ENCODE measurements at regions of chr2 and their contacts with region 1.

Region 1: GRCh38 chr2:171687287-171688128 is at the start of gene DYNC1I2:
- DNase-seq: peak; percentile 88
- ATAC-seq: peak; percentile 92
- H3K4me3 ChIP-seq: peak within 1 kb of the TSS; percentile 77 to 89 (median 88)
- H3K4me3 Mint-ChIP-seq: peak within 1 kb of the TSS; percentile 93
- H3K27ac ChIP-seq: peak within 1 kb of the TSS; percentile 58 to 83
- H3K27ac Mint-ChIP-seq: peak within 1 kb of the TSS; percentile 85
- H3K4me1 ChIP-seq: peaks cover 12 to 13% of the 10 kb centered on the region in 2 donors
- H3K4me1 Mint-ChIP-seq: peaks cover 18% of the 10 kb centered on the region
- H3K27me3 ChIP-seq: no peaks in the 10 kb centered on the region
- H3K27me3 Mint-ChIP-seq: peaks cover 9% of the 10 kb centered on the region
- CTCF ChIP-seq: no peak
- total RNA-seq, gene DYNC1I2: 53.9 and 57.6 TPM in 2 replicates

Region 2: GRCh38 chr2:169824373-169825333 is 1862.9 kb before region 1 on chr2 and contains the start of gene METTL5:
- CTCF ChIA-PET with region 1: no interaction called
- POLR2A ChIA-PET with region 1: no interaction called
- intact Hi-C with region 1: loop called (anchors 5 kb)
- DNase-seq: peak; percentile 86
- ATAC-seq: peak; percentile 74
- H3K4me3 ChIP-seq: peak within 1 kb of the TSS; percentile 64 to 90 (median 68)
- H3K4me3 Mint-ChIP-seq: peak within 1 kb of the TSS; percentile 90
- H3K27ac ChIP-seq: peak within 1 kb of the TSS in 1 of 2 donors; percentile 73
- H3K27ac Mint-ChIP-seq: peak within 1 kb of the TSS; percentile 90
- H3K4me1 ChIP-seq: peaks cover 28 to 34% of the 10 kb centered on the region in 2 donors
- H3K4me1 Mint-ChIP-seq: peaks cover 47% of the 10 kb centered on the region
- H3K27me3 ChIP-seq: no peaks in the 10 kb centered on the region
- H3K27me3 Mint-ChIP-seq: no peaks in the 10 kb centered on the region
- CTCF ChIP-seq: peak; percentile 94
- total RNA-seq, gene METTL5: 36.4 and 37.0 TPM in 2 replicates

Region 3: DNA sequence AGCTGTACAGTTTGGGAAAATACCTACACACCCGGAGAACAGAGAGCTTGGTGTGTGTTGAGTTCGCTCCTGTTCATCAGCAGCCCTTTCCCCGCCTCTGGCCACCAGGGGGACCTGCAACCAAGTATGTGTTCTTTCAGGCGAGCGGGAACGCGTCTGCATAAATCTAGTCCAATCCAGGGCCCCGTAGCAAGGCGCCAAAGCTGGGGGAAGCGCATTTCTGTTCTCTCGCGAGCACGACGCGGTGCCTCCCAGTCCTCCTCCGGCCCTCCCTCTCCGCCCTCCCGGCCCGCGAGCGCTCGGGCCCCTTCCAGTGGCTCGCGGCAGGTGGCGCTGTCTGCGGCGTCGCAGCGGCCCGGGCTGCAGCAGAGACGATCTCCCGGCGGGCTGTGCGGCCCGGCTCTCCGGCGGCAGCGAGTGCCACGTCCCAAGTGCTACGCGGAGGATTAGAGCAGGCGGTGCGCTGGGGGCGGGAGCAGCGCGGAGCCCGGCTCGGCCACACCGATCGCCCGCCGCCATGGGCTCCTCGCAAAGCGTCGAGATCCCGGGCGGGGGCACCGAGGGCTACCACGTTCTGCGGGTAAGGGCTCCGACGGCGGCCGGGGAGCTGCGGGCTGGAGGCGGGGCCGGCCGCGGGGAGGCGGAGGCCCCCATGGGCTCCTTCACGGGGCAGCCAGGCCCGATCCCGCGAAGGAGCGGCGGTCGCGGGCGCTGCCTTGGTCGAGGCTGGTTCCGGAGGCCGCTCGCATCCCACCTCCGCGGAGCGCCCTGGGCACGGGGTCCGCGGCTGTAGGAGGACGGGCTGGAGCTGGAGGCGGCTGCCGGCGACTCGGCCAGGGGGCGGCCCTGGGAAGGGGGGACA is 758.5 kb before region 1 on chr2 and contains the start of gene GORASP2:
- CTCF ChIA-PET with region 1: interaction called, 3 read pairs
- POLR2A ChIA-PET with region 1: no interaction called
- intact Hi-C with region 1: loop called (anchors 1 kb)
- DNase-seq: peak; percentile 99
- ATAC-seq: peak; percentile 91
- H3K4me3 ChIP-seq: peak within 1 kb of the TSS; percentile 73 to 95 (median 89)
- H3K4me3 Mint-ChIP-seq: peak within 1 kb of the TSS; percentile 92
- H3K27ac ChIP-seq: peak within 1 kb of the TSS; percentile 75 to 90
- H3K27ac Mint-ChIP-seq: peak within 1 kb of the TSS; percentile 96
- H3K4me1 ChIP-seq: peaks cover 20 to 22% of the 10 kb centered on the region in 2 donors
- H3K4me1 Mint-ChIP-seq: peaks cover 34% of the 10 kb centered on the region
- H3K27me3 ChIP-seq: no peaks in the 10 kb centered on the region
- H3K27me3 Mint-ChIP-seq: no peaks in the 10 kb centered on the region
- CTCF ChIP-seq: peak; percentile 99
- total RNA-seq, gene GORASP2: 48.8 and 50.5 TPM in 2 replicates

Region 4: GRCh38 chr2:171703574-171704347 is 16.3 kb after region 1 on chr2:
- CTCF ChIA-PET with region 1: interaction called, 16 read pairs
- POLR2A ChIA-PET with region 1: no interaction called
- intact Hi-C with region 1: loop called (anchors 2 kb)
- DNase-seq: peak; percentile 52
- ATAC-seq: no peak
- H3K4me3 ChIP-seq: no peak overlapping the region
- H3K4me3 Mint-ChIP-seq: no peak overlapping the region
- H3K27ac ChIP-seq: no peak overlapping the region
- H3K27ac Mint-ChIP-seq: peak overlapping the region; percentile 81
- H3K4me1 ChIP-seq: peaks cover 7 to 8% of the 10 kb centered on the region in 2 donors
- H3K4me1 Mint-ChIP-seq: peaks cover 10% of the 10 kb centered on the region
- H3K27me3 ChIP-seq: no peaks in the 10 kb centered on the region
- H3K27me3 Mint-ChIP-seq: no peaks in the 10 kb centered on the region
- CTCF ChIP-seq: peak; percentile 71

Region 5: DNA sequence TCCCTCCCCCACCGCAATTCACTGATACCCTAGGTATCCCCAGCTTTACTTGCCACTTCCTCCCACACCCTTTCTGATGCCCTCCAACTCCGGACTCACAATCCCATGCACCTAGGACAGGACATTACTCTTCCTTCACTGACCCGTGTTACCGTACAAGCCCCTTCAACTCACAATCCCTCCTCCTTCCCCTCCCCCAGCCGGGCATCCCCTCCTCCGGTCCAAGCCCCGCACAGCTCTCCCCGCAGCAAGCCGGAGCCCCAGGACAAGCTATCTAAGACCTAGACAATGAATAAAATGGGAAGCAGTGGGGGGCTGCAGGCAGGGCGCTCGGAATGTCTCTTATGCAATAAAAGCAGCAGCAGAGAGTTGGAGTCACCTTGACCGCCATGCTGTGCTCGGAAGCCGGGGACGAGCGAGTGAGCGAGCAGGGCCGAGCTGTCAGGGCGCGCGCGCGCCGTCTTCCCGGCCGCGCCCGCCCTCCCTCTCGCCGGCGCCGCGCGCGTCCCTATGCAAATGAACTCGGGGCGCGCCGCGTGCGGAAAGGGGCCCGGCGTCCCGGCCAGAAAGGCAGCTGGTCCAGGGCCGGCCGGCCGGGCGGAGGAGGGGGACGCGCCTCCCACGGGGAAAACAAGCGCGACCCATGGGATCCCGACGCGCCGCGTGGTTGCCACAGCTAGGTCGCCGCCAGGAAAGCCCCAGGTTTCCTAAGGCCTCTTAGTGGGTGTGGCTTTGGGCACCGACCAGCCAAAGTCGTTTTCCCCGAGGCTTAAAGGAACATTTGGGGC is 206.5 kb after region 1 on chr2 and contains the start of gene SLC25A12:
- CTCF ChIA-PET with region 1: no interaction called
- POLR2A ChIA-PET with region 1: no interaction called
- intact Hi-C with region 1: loop called (anchors 5 kb)
- DNase-seq: peak; percentile 87
- ATAC-seq: peak; percentile 92
- H3K4me3 ChIP-seq: peak within 1 kb of the TSS; percentile 78 to 93 (median 88)
- H3K4me3 Mint-ChIP-seq: peak within 1 kb of the TSS; percentile 99
- H3K27ac ChIP-seq: peak within 1 kb of the TSS; percentile 69 to 88
- H3K27ac Mint-ChIP-seq: peak within 1 kb of the TSS; percentile 91
- H3K4me1 ChIP-seq: peaks cover 14 to 16% of the 10 kb centered on the region in 2 donors
- H3K4me1 Mint-ChIP-seq: peaks cover 25% of the 10 kb centered on the region
- H3K27me3 ChIP-seq: no peaks in the 10 kb centered on the region
- H3K27me3 Mint-ChIP-seq: no peaks in the 10 kb centered on the region
- CTCF ChIP-seq: no peak
- total RNA-seq, gene SLC25A12: 19.6 and 21.0 TPM in 2 replicates

Region 6: DNA sequence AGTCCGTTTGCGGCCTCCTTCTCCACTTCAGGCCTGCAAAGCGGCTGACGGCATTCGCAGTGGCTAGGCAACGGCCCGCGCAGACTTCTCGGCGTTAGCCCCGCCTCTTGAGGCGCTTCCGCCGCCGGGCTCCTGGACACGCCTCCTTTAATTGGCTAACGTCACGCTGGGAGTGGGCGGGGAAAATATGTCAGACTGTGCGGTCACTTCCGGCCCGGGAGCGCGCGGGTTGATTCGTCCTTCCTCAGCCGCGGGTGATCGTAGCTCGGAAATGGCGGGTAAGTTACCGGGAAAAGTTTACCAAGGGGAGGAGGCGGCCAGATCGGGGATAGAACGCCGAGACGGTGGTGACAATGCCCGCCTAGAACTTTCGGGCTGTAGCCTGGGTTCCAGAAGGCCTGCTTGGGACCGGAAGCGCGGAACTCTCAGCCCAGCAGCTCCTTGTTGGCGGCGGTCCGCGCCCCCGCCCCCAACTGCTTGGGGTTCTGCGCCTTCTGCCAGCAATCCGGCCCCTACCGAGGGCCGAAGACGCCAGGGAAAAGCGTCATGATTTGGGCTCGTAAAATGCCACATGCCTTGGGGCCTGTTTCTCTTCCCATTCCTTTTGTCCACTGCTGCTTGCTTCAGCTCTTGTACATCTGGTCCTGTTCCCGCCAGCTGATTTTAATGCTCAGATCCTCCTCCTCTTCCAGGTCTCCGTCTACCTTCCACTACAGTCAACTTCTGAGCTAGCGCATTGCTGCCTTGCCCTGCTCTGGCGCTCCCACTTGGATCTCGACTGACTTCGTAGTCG is 234.9 kb after region 1 on chr2 and contains the start of gene HAT1:
- CTCF ChIA-PET with region 1: no interaction called
- POLR2A ChIA-PET with region 1: no interaction called
- intact Hi-C with region 1: loop called (anchors 1 kb)
- DNase-seq: peak; percentile 98
- ATAC-seq: peak; percentile 98
- H3K4me3 ChIP-seq: peak within 1 kb of the TSS; percentile 81 to 98 (median 96)
- H3K4me3 Mint-ChIP-seq: peak within 1 kb of the TSS; percentile 97
- H3K27ac ChIP-seq: peak within 1 kb of the TSS; percentile 87 to 93
- H3K27ac Mint-ChIP-seq: peak within 1 kb of the TSS; percentile 99
- H3K4me1 ChIP-seq: peaks cover 16% of the 10 kb centered on the region in 2 donors
- H3K4me1 Mint-ChIP-seq: peaks cover 31% of the 10 kb centered on the region
- H3K27me3 ChIP-seq: no peaks in the 10 kb centered on the region
- H3K27me3 Mint-ChIP-seq: no peaks in the 10 kb centered on the region
- CTCF ChIP-seq: no peak
- total RNA-seq, gene HAT1: 25.1 and 26.9 TPM in 2 replicates

Region 7: GRCh38 chr2:171999604-172000469 is 312.3 kb after region 1 on chr2 and contains the start of gene METAP1D:
- CTCF ChIA-PET with region 1: no interaction called
- POLR2A ChIA-PET with region 1: no interaction called
- intact Hi-C with region 1: loop called (anchors 1 kb)
- DNase-seq: peak; percentile 90
- ATAC-seq: peak; percentile 94
- H3K4me3 ChIP-seq: peak within 1 kb of the TSS; percentile 55 to 93 (median 83)
- H3K4me3 Mint-ChIP-seq: peak within 1 kb of the TSS; percentile 98
- H3K27ac ChIP-seq: peak within 1 kb of the TSS; percentile 12 to 73
- H3K27ac Mint-ChIP-seq: peak within 1 kb of the TSS; percentile 93
- H3K4me1 ChIP-seq: peaks cover 13 to 14% of the 10 kb centered on the region in 2 donors
- H3K4me1 Mint-ChIP-seq: peaks cover 18% of the 10 kb centered on the region
- H3K27me3 ChIP-seq: peaks cover 0 to 3% (median 0%) of the 10 kb centered on the region in 4 experiments
- H3K27me3 Mint-ChIP-seq: peaks cover 6% of the 10 kb centered on the region
- CTCF ChIP-seq: no peak
- total RNA-seq, gene METAP1D: 8.2 and 8.9 TPM in 2 replicates

Measured in B cell (primary cell).